Heart right ventricle (tissue), 16 donors: ENCODE measurements at regions of chr12 and their contacts with region 1.

Region 1: GRCh38 chr12:112226768-112227167 is 101.4 kb downstream of the TRAFD1 start:
- DNase-seq: no peak
- ATAC-seq: no peak
- H3K4me3 ChIP-seq: no peak overlapping the region
- H3K27ac ChIP-seq: no peak overlapping the region
- H3K4me1 ChIP-seq: no peaks in the 10 kb centered on the region
- H3K27me3 ChIP-seq: no peaks in the 10 kb centered on the region
- CTCF ChIP-seq: no peak

Region 2: GRCh38 chr12:112061137-112061536 is 165.6 kb before region 1 on chr12:
- intact Hi-C with region 1: loop called in 1 of 10 experiments (anchors 10 kb)
- DNase-seq: no peak
- ATAC-seq: no peak
- H3K4me3 ChIP-seq: no peak overlapping the region
- H3K27ac ChIP-seq: no peak overlapping the region
- H3K4me1 ChIP-seq: peaks cover 0 to 4% (median 0%) of the 10 kb centered on the region in 9 donors
- H3K27me3 ChIP-seq: no peaks in the 10 kb centered on the region
- CTCF ChIP-seq: no peak

Region 3: DNA sequence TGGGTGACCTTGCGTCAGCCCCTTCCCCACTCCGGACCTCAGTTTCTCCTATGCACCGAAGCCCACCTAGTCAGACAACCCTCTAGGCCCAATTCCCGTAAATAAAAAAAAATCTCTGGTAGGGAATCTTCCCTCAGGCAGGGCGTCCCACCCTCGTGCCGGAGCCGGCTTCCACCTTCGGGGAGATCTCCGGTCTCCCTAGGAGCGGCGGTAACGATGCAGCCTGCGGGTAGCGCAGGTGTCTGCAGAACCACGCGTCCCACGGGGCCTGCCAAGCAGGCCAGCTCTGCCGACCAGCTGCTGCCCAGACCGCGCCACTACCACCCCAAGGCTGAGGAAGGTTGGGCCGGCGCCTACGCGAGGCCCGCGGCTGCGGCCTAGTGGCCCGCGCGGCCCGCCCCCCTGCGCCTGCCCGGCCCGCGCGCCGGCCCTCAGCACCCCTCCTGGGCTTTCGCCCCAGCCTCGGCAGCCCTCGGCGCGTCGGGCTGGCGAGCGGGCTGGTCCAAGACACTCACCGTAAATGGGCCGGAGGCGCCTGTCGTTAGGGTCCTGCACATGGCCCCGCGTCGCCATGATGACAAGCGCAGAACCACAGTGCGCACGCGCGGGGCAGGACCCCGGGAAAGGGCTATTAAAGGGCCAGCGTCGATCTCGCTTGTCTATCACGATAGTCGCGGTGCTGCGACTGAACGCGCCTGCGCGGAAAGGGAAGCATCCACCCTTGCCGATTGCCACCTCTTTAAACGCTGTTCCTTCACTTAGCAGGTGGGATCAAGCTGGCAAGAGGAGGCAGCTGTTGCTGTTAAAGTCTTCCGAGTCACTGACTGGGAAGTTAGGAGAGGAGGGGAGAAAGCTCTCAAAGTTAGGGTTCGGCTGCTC is 118.3 kb before region 1 on chr12 and contains the start of gene NAA25:
- intact Hi-C with region 1: no loop called
- DNase-seq: peak; percentile 91 to 93
- ATAC-seq: peak; percentile 89 to 97 (median 94)
- H3K4me3 ChIP-seq: peak within 1 kb of the TSS; percentile 64 to 96 (median 90)
- H3K27ac ChIP-seq: peak within 1 kb of the TSS; percentile 90 to 99 (median 96)
- H3K4me1 ChIP-seq: peaks cover 0 to 53% (median 34%) of the 10 kb centered on the region in 9 donors
- H3K27me3 ChIP-seq: no peaks in the 10 kb centered on the region
- CTCF ChIP-seq: no peak
- total RNA-seq, gene NAA25: 12.1 to 26.3 (median 18.3) TPM